IMR-90 (cell line): ENCODE measurements at regions of chr10 and their contacts with region 1.

Region 1: GRCh38 chr10:12484002-12484918 is 134.9 kb downstream of the CAMK1D start:
- DNase-seq: no peak
- ATAC-seq: no peak
- H3K4me3 ChIP-seq: no peak overlapping the region
- H3K27ac ChIP-seq: no peak overlapping the region
- H3K4me1 ChIP-seq: no peaks in the 10 kb centered on the region
- H3K27me3 ChIP-seq: no peaks in the 10 kb centered on the region
- CTCF ChIP-seq: no peak
- POLR2A ChIP-seq: no peak
- RAD21 ChIP-seq: no peak

Region 2: DNA sequence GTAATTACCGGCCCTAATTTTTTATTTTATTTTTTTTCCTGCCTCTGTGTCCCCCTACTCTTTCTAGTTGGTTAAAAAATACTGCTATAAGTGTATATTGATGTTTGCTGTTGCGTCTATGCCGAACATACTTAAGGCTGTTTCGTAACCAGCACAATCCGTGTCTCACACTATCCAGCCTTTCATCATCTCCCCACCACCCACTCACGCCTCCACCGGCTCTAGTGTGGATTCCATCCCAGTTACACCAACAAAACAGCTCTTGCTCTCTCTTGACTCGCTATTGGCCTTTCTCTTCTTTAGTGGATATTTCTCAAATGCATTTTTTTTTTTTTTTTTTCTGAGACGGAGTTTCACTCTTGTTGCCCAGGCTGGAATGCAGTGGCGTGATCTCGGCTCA is 205.0 kb before region 1 on chr10:
- CTCF ChIA-PET with region 1: no interaction called
- POLR2A ChIA-PET with region 1: interaction called, 14 read pairs
- dilution Hi-C with region 1: no loop called
- in situ Hi-C with region 1: no loop called
- intact Hi-C with region 1: no loop called
- DNase-seq: peak; percentile 60
- ATAC-seq: peak; percentile 42
- H3K4me3 ChIP-seq: no peak overlapping the region
- H3K27ac ChIP-seq: no peak overlapping the region
- H3K4me1 ChIP-seq: no peaks in the 10 kb centered on the region
- H3K27me3 ChIP-seq: no peaks in the 10 kb centered on the region
- CTCF ChIP-seq: no peak
- POLR2A ChIP-seq: no peak
- RAD21 ChIP-seq: no peak